H1 (cell line): ENCODE measurements at regions of chr14 and their contacts with region 1.

Region 1: DNA sequence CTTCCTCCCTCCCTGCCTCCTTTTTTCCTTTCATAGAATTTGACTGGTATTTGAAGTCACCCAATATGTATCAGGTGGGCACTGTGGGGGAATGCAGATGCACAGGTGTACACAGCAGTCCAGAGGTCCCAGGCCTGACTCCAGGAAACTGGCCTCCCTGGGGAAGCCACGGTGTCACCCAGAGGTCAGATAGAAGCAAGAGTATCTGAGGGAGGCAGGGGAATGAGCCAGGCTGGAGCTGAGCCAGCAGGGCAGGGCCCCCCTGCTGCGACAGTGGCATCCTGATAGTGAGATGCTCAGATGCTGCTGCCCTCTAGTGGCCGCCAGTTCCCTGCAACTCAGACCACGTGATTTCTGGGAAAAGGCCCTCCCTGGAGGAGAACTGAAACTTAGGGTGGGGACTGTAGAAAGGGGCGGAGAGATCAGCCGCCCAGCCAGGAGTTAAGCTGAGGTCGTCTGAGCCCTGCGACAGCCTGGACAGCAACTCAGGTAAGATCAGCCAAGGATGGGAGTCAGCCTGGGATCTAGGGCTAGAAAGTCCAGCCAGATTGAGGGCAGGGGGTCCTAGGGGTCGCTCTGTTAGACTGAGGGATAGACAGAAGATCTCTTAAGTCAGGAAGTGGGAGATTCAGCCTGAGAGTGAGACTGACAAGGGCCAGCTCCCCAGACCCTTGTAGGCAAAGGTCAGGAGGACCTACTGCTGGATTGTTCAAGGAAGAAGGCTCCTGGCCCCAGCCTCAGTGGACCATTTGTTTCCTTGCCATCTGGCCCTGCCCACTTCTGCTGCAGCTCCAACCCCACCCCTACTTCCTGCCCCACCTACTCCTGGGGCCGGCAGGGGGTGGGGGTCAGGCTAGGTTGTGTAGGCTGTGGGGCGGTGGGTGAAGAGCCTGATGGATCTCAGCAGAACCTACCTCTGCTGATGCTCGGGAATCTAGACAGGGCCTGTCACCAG is at the start of gene IRF9:
- DNase-seq: peak; percentile 94 to 100
- H3K4me3 ChIP-seq: peak within 1 kb of the TSS; percentile 6 to 52 (median 20); a peak in 5 of 8 replicates
- H3K27ac ChIP-seq: peak within 1 kb of the TSS; percentile 55; the same call in 1 of the 2 replicates
- H3K4me1 ChIP-seq: peaks cover 0 to 10% (median 2%) of the 10 kb centered on the region in 4 experiments; a peak in 3 of 7 replicates
- H3K27me3 ChIP-seq: no peaks in the 10 kb centered on the region
- CTCF ChIP-seq: peak; percentile 85 to 97 (median 95)
- EP300 ChIP-seq: 0 out of 3 replicates have a peak, but pooled peaks of 1 of the 2 experiments have one; percentile 68
- POLR2A ChIP-seq: peak in 1 of 2 experiments; percentile 48; a peak in 1 of 3 replicates
- RAD21 ChIP-seq: peak; percentile 73 to 78
- total RNA-seq, gene IRF9: 11.1 and 11.4 TPM in 2 replicates

Region 2: GRCh38 chr14:24058260-24058950 is 102.7 kb before region 1 on chr14:
- CTCF ChIA-PET with region 1: interaction called, 17 read pairs
- POLR2A ChIA-PET with region 1: interaction called, 4 read pairs
- DNase-seq: peak in 1 of 2 experiments; percentile 84
- H3K4me3 ChIP-seq: no peak overlapping the region
- H3K27ac ChIP-seq: no peak overlapping the region
- H3K4me1 ChIP-seq: 0 out of 7 replicates have a peak, but pooled peaks cover 0 to 2% (median 0%) of the 10 kb centered on the region in 4 experiments
- H3K27me3 ChIP-seq: no peaks in the 10 kb centered on the region
- CTCF ChIP-seq: peak in 2 of 3 experiments; percentile 84 to 93; a peak in 3 of 4 replicates
- EP300 ChIP-seq: no peak
- POLR2A ChIP-seq: no peak
- RAD21 ChIP-seq: peak; percentile 93 to 97

Region 3: DNA sequence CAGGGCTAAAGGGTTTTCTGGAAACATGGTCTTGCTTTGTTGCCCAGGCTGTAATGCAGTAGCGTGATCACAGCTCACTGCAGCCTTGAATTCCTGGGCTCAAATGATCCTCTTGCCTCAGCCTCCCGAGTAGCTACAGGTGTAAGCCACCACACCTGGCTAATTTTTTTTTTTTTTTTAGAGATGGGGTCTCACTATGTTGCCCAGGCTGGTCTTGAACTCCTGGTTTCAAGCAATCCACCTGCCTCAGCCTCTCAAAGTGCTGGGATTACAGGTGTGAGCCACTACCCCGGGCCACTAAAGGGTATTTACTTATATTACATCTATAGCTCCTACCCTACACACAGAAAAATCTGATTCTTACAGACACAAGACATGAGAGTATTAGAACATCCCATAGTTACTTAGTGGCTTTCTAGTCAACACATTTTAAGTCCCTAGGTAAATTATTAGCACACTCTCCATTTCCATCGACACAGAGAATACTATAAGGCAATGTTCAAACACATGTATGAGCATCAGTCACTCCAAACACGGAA is 52.7 kb before region 1 on chr14:
- CTCF ChIA-PET with region 1: interaction called, 17 read pairs
- POLR2A ChIA-PET with region 1: interaction called, 16 read pairs
- DNase-seq: no peak
- H3K4me3 ChIP-seq: no peak overlapping the region
- H3K27ac ChIP-seq: no peak overlapping the region
- H3K4me1 ChIP-seq: no peaks in the 10 kb centered on the region
- H3K27me3 ChIP-seq: no peaks in the 10 kb centered on the region
- CTCF ChIP-seq: no peak
- EP300 ChIP-seq: no peak
- POLR2A ChIP-seq: no peak
- RAD21 ChIP-seq: no peak

Region 4: GRCh38 chr14:24135834-24136542 is 25.1 kb before region 1 on chr14 and contains the start of gene PSME1:
- CTCF ChIA-PET with region 1: interaction called, 17 read pairs
- POLR2A ChIA-PET with region 1: interaction called, 27 read pairs
- DNase-seq: peak in 1 of 2 experiments; percentile 94
- H3K4me3 ChIP-seq: peak within 1 kb of the TSS; percentile 79 to 100 (median 84)
- H3K27ac ChIP-seq: peak within 1 kb of the TSS; percentile 14; the same call in 1 of the 2 replicates
- H3K4me1 ChIP-seq: peaks cover 0 to 10% (median 6%) of the 10 kb centered on the region in 4 experiments; a peak in 5 of 7 replicates
- H3K27me3 ChIP-seq: no peaks in the 10 kb centered on the region
- CTCF ChIP-seq: no peak
- EP300 ChIP-seq: no peak
- POLR2A ChIP-seq: peak; percentile 37 to 38; a peak in 1 of 3 replicates
- RAD21 ChIP-seq: no peak
- total RNA-seq, gene PSME1: 85.9 and 91.7 TPM in 2 replicates

Region 5: GRCh38 chr14:24171422-24172260 is 10.5 kb after region 1 on chr14 and contains the start of gene REC8:
- CTCF ChIA-PET with region 1: interaction called, 7 read pairs
- POLR2A ChIA-PET with region 1: interaction called, 93 read pairs
- DNase-seq: peak; percentile 97
- H3K4me3 ChIP-seq: peak within 1 kb of the TSS; percentile 62 to 77 (median 71)
- H3K27ac ChIP-seq: no peak within 1 kb of the TSS
- H3K4me1 ChIP-seq: peaks cover 0 to 9% (median 7%) of the 10 kb centered on the region in 4 experiments; a peak in 4 of 7 replicates
- H3K27me3 ChIP-seq: no peaks in the 10 kb centered on the region
- CTCF ChIP-seq: peak in 1 of 3 experiments; percentile 7; a peak in 1 of 4 replicates
- EP300 ChIP-seq: peak in 1 of 2 experiments; percentile 69; a peak in 1 of 3 replicates
- POLR2A ChIP-seq: peak in 1 of 2 experiments; percentile 44; a peak in 1 of 3 replicates
- RAD21 ChIP-seq: 0 out of 4 replicates have a peak, but pooled peaks of 1 of the 2 experiments have one; percentile 6
- total RNA-seq, gene REC8: 25.8 and 28.5 TPM in 2 replicates

Region 6: DNA sequence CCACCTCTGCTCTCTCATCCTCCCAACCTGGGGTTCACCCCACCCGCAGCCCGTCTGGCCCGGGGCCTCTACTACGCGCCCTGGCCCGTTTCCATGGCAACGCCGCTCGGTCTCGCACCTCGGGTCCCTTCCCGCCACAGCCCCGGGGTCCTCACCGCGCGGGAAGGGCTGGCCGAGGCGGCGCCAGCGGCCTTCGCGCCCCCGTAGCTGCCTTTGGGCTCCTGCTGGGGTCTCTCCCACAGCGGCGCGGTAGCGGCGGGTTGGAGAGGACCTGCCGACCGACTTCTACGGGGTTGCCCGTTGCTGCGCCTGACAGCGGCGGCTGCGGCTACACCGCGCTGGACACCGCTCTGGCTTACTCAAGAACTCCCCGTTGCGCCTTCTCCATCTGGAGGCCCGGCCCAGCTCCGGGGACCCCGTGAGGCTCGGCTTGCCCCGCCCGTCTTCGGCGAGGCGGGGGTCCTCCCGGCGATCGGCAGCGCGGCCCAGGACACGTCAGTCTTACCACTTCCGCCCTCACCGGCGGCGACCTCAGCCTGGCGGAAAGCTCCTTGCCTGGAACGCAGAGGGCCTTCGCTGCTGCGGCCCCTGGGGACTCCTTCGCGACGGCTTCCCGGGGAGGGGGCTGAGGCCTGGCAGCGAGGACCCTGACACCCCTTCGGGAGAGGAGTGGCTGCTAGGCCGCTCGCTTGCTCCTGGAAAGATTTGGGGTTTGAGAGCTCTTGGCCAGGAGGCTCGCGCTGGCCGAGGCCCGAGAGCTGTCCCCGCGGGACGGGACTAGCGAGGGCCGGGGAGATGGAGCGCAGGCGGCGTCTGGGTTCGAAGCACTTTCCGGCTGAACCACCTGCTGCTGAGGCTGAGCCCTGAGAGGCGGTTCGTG is 34.3 kb after region 1 on chr14 and contains the start of gene TM9SF1:
- CTCF ChIA-PET with region 1: no interaction called
- POLR2A ChIA-PET with region 1: interaction called, 13 read pairs
- DNase-seq: peak; percentile 83 to 93
- H3K4me3 ChIP-seq: peak within 1 kb of the TSS; percentile 65 to 88 (median 84)
- H3K27ac ChIP-seq: peak within 1 kb of the TSS; percentile 95
- H3K4me1 ChIP-seq: peaks cover 0 to 9% (median 3%) of the 10 kb centered on the region in 4 experiments; a peak in 3 of 7 replicates
- H3K27me3 ChIP-seq: no peaks in the 10 kb centered on the region
- CTCF ChIP-seq: peak in 1 of 3 experiments; percentile 8; a peak in 1 of 4 replicates
- EP300 ChIP-seq: no peak
- POLR2A ChIP-seq: peak; percentile 7 to 61; a peak in 2 of 3 replicates
- RAD21 ChIP-seq: no peak
- total RNA-seq, gene TM9SF1: 22.2 and 25.3 TPM in 2 replicates